Esophagus muscularis mucosa (tissue), 4 donors: ENCODE measurements at regions of chr15 and their contacts with region 1.

Region 1: DNA sequence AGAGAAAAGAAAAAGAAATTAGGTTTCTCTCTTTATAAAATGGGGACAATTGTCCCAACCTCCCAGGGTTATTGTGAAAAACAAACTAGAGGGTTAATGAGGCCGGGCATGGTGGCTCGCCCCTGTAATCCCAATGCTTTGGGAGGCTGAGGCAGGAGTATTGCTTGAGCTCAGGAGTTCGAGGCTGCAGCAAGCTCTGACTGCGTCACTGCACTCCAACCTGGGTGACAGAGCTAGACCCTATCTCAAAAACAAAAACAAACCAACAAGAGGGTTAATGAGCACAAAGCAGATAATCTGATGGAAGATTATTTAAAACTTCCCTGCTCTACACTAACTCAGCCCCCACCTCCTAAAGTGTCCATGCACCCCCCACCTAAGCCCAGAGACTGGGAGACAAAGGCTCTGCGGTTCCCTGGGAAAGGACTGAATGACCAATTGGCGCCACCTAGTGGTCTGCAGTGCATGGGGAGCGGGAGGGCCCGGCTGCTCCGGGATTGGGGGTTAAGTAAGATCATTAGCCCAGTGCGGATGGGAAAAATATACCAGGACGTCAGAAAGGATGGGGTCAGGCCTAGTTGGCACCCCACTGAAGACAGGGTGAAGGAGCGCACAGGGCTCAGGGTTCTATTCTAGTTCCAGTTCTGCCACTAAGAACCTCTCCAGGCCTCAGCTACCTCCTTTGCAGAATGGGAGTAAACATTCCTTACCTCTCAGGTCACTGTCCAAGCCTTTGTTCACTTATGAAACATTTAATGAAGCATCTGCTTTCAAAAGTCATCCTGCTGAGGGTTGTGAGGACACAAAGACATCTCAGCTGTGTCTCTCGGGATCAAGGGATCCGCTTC is 15.6 kb downstream of the PIF1 start:
- DNase-seq: no peak
- H3K4me3 ChIP-seq: no peak overlapping the region
- H3K27ac ChIP-seq: peak overlapping the region; percentile 90 to 93 (median 92)
- H3K4me1 ChIP-seq: peaks cover 8 to 53% (median 45%) of the 10 kb centered on the region in 4 donors
- H3K27me3 ChIP-seq: no peaks in the 10 kb centered on the region
- CTCF ChIP-seq: peak in 2 of 3 experiments; percentile 95 to 96
- EP300 ChIP-seq: no peak
- POLR2A ChIP-seq: no peak

Region 2: DNA sequence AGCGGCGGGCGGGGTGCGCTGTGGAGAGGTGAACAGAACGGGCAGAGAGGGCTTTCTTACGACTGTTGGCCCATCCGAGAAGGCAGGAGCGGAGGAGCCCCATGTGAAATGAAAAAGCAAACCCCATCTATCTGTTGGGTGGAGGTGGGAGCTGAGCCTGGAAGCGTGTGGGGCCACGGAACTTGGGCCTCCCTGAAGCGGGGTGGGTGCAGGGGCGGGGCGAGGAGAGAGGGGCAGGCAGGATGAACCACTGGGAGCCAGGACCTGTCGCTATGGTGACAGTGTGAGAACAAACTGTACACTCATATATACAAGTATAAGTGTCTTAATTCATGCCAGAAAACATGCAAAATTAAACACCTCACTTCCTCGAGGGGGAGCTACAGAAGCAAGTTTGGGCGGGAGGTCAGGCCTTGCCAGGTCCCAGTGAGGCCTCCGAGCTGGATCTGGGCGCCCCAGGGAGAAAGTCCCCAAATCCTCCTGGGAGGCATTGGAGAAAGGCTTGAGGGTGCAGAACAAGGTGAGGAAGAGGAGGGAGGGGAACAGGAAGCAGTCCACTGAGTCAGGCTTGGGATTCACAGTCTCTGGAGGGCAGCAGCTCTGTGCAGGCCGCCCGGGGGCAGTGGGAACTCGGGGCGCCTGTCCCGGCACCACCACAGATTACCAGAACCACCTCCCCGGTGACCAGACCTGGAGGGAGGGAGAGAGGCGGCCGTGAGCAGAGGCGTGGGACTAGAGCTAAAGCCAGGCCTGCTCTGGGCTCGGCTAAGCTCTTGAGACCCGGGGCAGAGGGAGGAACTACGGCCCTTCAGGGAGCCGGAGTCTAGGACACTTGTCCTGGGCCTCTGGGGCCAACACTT is 69.3 kb before region 1 on chr15:
- intact Hi-C with region 1: loop called (anchors 2 kb)
- DNase-seq: no peak
- H3K4me3 ChIP-seq: peak overlapping the region; percentile 34 to 50 (median 40)
- H3K27ac ChIP-seq: peak overlapping the region; percentile 86 to 93 (median 90)
- H3K4me1 ChIP-seq: peaks cover 54 to 87% (median 84%) of the 10 kb centered on the region in 4 donors
- H3K27me3 ChIP-seq: no peaks in the 10 kb centered on the region
- CTCF ChIP-seq: peak; percentile 46 to 76 (median 55)
- EP300 ChIP-seq: no peak
- POLR2A ChIP-seq: no peak